ENCODE measurements at regions of chr17 and their contacts with region 1.

Region 1: GRCh38 chr17:41322094-41322902 is 6.8 kb upstream of the KRTAP17-1 start:
- DNase-seq: peak in 4 of 14 experiments; percentile 33 to 75 (median 70)
- ATAC-seq: peak; percentile 87
- H3K4me3 ChIP-seq: no peak overlapping the region
- H3K4me3 Mint-ChIP-seq: peak overlapping the region; percentile 23
- H3K27ac ChIP-seq: no peak overlapping the region
- H3K27ac Mint-ChIP-seq: peak overlapping the region; percentile 89
- H3K4me1 ChIP-seq: peaks cover 54% of the 10 kb centered on the region
- H3K4me1 Mint-ChIP-seq: peaks cover 59% of the 10 kb centered on the region
- H3K27me3 ChIP-seq: no peaks in the 10 kb centered on the region
- H3K27me3 Mint-ChIP-seq: no peaks in the 10 kb centered on the region
- CTCF ChIP-seq: peak; percentile 88

Region 2: DNA sequence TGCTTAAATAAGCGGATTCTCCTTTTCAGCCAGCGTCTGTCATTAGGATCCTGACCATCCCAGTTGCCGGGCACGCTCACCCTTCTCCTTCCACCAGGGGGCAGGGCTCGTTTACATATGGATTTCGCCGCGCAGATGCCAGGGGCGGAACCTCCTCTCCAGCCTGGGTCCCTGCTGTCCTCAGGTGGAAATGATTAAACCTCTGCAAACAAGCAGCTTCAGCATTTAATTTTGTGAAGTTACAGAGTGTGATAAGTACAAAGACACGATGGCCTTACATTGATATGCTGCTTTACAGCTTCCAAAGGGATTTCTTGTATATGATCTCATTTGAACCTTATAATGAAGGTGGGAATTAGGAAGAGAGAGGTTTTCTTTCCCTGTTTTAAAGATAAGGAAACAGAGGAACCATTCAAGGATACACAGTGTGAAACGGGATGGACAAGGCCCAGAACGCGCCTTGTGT is 518.6 kb before region 1 on chr17:
- CTCF ChIA-PET with region 1: no interaction called
- POLR2A ChIA-PET with region 1: no interaction called
- intact Hi-C with region 1: loop called in 1 of 2 experiments (anchors 5 kb)
- DNase-seq: peak; percentile 51 to 85 (median 66)
- ATAC-seq: peak; percentile 89
- H3K4me3 ChIP-seq: no peak overlapping the region
- H3K4me3 Mint-ChIP-seq: no peak overlapping the region
- H3K27ac ChIP-seq: no peak overlapping the region
- H3K27ac Mint-ChIP-seq: no peak overlapping the region
- H3K4me1 ChIP-seq: no peaks in the 10 kb centered on the region
- H3K4me1 Mint-ChIP-seq: peaks cover 4% of the 10 kb centered on the region
- H3K27me3 ChIP-seq: peaks cover 11 to 58% of the 10 kb centered on the region in 2 experiments
- H3K27me3 Mint-ChIP-seq: peaks cover 54% of the 10 kb centered on the region
- CTCF ChIP-seq: peak; percentile 91

Region 3: DNA sequence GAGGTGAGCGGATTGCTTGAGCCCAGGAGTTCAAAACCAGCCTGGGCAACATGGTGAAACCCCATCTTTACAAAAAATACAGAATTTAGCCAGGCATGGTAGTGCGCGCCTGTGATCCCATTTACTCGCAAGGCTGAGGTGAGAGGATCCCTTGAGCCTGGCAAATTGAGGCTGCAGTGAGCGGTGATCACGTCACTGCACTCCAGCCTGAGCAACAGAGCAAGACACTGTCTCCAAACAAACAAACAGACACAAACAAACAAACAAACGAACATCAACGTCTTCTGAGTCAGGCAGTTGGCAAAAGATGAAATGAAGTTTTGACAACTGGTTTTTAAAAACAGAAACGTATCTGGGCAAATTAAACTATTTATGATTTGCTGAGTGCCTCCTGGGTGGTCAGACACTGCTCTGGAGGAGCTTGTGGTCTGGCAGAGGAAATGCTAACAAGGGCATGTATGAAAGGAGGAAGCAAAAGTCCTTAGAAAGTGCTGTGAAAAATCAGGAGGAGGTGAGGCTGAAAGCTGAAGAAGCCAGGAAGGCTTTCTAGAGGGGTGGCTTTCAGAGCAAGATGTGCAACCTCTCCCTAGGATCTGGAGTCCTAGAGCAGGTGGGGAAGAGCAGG is 427.1 kb before region 1 on chr17:
- CTCF ChIA-PET with region 1: no interaction called
- POLR2A ChIA-PET with region 1: no interaction called
- intact Hi-C with region 1: no loop called
- DNase-seq: no peak
- ATAC-seq: no peak
- H3K4me3 ChIP-seq: no peak overlapping the region
- H3K4me3 Mint-ChIP-seq: no peak overlapping the region
- H3K27ac ChIP-seq: no peak overlapping the region
- H3K27ac Mint-ChIP-seq: no peak overlapping the region
- H3K4me1 ChIP-seq: no peaks in the 10 kb centered on the region
- H3K4me1 Mint-ChIP-seq: no peaks in the 10 kb centered on the region
- H3K27me3 ChIP-seq: peaks cover 2 to 21% of the 10 kb centered on the region in 2 experiments
- H3K27me3 Mint-ChIP-seq: peaks cover 69% of the 10 kb centered on the region
- CTCF ChIP-seq: no peak

Region 4: GRCh38 chr17:41073676-41074075 is 248.6 kb before region 1 on chr17:
- CTCF ChIA-PET with region 1: no interaction called
- POLR2A ChIA-PET with region 1: no interaction called
- intact Hi-C with region 1: no loop called
- DNase-seq: no peak
- ATAC-seq: no peak
- H3K4me3 ChIP-seq: no peak overlapping the region
- H3K4me3 Mint-ChIP-seq: no peak overlapping the region
- H3K27ac ChIP-seq: no peak overlapping the region
- H3K27ac Mint-ChIP-seq: no peak overlapping the region
- H3K4me1 ChIP-seq: no peaks in the 10 kb centered on the region
- H3K4me1 Mint-ChIP-seq: no peaks in the 10 kb centered on the region
- H3K27me3 ChIP-seq: no peaks in the 10 kb centered on the region
- H3K27me3 Mint-ChIP-seq: peaks cover 32% of the 10 kb centered on the region
- CTCF ChIP-seq: no peak

Region 5: DNA sequence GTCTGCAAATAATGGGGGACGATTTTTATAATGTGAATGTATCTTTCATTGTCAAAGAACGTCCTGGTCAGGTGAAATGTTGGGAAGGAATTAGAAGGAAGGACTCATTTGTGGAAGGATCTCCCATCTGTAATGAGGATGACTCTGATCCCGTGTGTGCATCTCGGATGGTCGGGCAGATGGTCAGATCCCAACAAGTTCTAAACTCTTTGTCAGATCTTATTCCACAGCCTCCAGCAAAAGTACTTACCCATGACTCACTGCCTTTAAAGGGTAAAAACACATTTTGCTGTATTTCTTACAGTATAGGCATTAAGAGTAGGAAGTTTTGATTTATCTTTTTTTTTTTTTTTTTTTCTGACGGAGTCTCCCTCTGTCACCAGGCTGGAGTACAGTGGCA is 223.8 kb before region 1 on chr17:
- CTCF ChIA-PET with region 1: no interaction called
- POLR2A ChIA-PET with region 1: no interaction called
- intact Hi-C with region 1: loop called in 1 of 2 experiments (anchors 5 kb)
- DNase-seq: no peak
- ATAC-seq: no peak
- H3K4me3 ChIP-seq: no peak overlapping the region
- H3K4me3 Mint-ChIP-seq: no peak overlapping the region
- H3K27ac ChIP-seq: no peak overlapping the region
- H3K27ac Mint-ChIP-seq: no peak overlapping the region
- H3K4me1 ChIP-seq: peaks cover 3% of the 10 kb centered on the region
- H3K4me1 Mint-ChIP-seq: peaks cover 17% of the 10 kb centered on the region
- H3K27me3 ChIP-seq: peaks cover 0 to 2% of the 10 kb centered on the region in 2 experiments
- H3K27me3 Mint-ChIP-seq: peaks cover 10% of the 10 kb centered on the region
- CTCF ChIP-seq: no peak

Region 6: GRCh38 chr17:41121742-41122141 is 200.6 kb before region 1 on chr17:
- CTCF ChIA-PET with region 1: no interaction called
- POLR2A ChIA-PET with region 1: interaction called, 3 read pairs
- intact Hi-C with region 1: loop called (anchors 1 to 5 kb)
- DNase-seq: no peak
- ATAC-seq: no peak
- H3K4me3 ChIP-seq: no peak overlapping the region
- H3K4me3 Mint-ChIP-seq: no peak overlapping the region
- H3K27ac ChIP-seq: no peak overlapping the region
- H3K27ac Mint-ChIP-seq: no peak overlapping the region
- H3K4me1 ChIP-seq: peaks cover 25% of the 10 kb centered on the region
- H3K4me1 Mint-ChIP-seq: peaks cover 71% of the 10 kb centered on the region
- H3K27me3 ChIP-seq: no peaks in the 10 kb centered on the region
- H3K27me3 Mint-ChIP-seq: no peaks in the 10 kb centered on the region
- CTCF ChIP-seq: no peak

Region 7: DNA sequence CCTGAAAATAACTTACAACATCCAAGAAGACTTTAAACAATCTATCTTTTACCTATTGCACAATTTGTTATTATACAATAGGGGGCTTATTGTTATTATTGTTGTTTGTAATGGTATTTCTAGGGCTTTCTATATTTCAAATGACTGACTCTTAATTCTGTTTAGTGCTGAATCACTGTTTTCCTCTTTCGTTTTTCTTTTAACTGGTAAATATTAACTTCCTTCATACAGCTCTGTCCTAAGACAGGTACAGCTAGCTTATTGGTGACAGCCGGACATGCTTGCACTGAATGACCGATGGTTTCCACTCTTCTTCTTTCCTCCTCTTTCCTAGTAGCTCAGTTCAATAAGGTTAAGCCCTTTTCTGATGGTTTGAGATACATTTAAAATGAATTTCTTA is 35.2 kb before region 1 on chr17:
- CTCF ChIA-PET with region 1: no interaction called
- POLR2A ChIA-PET with region 1: no interaction called
- intact Hi-C with region 1: no loop called
- DNase-seq: no peak
- ATAC-seq: no peak
- H3K4me3 ChIP-seq: no peak overlapping the region
- H3K4me3 Mint-ChIP-seq: no peak overlapping the region
- H3K27ac ChIP-seq: no peak overlapping the region
- H3K27ac Mint-ChIP-seq: no peak overlapping the region
- H3K4me1 ChIP-seq: no peaks in the 10 kb centered on the region
- H3K4me1 Mint-ChIP-seq: peaks cover 18% of the 10 kb centered on the region
- H3K27me3 ChIP-seq: no peaks in the 10 kb centered on the region
- H3K27me3 Mint-ChIP-seq: no peaks in the 10 kb centered on the region
- CTCF ChIP-seq: no peak

Region 8: GRCh38 chr17:41298458-41299135 is 23.7 kb before region 1 on chr17:
- CTCF ChIA-PET with region 1: interaction called, 4 read pairs
- POLR2A ChIA-PET with region 1: no interaction called
- intact Hi-C with region 1: loop called in 1 of 2 experiments (anchors 1 kb)
- DNase-seq: no peak
- ATAC-seq: no peak
- H3K4me3 ChIP-seq: no peak overlapping the region
- H3K4me3 Mint-ChIP-seq: no peak overlapping the region
- H3K27ac ChIP-seq: no peak overlapping the region
- H3K27ac Mint-ChIP-seq: no peak overlapping the region
- H3K4me1 ChIP-seq: no peaks in the 10 kb centered on the region
- H3K4me1 Mint-ChIP-seq: peaks cover 13% of the 10 kb centered on the region
- H3K27me3 ChIP-seq: no peaks in the 10 kb centered on the region
- H3K27me3 Mint-ChIP-seq: peaks cover 4% of the 10 kb centered on the region
- CTCF ChIP-seq: no peak

Region 9: DNA sequence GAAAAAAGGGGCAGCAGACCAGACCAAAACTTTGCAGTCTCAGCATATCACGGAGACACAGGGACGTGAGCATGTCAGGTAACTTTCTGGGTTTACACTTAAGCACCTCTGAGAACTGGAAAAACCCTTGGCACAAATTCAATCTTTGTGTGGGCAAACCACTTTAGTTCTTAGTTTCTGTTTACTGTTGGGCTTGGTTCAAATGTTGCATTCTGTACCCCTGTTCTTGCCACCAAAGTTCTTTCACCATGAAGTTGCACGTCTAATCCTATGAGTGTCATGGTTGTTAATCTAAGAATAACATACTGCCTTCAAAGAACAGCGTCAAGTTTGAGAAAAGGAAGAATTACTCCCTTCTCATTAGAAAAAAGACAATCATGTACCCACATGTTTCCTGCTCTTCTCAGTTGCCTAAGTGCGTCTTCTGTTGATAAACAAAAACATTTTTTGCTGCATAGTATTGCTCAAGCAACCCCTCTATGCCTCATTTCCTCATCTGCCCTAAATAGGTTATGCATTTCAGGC is 16.7 kb after region 1 on chr17:
- CTCF ChIA-PET with region 1: interaction called, 15 read pairs
- POLR2A ChIA-PET with region 1: interaction called, 12 read pairs
- intact Hi-C with region 1: no loop called
- DNase-seq: peak in 8 of 14 experiments; percentile 25 to 93 (median 52)
- ATAC-seq: peak; percentile 83
- H3K4me3 ChIP-seq: no peak overlapping the region
- H3K4me3 Mint-ChIP-seq: peak overlapping the region; percentile 23
- H3K27ac ChIP-seq: peak overlapping the region; percentile 87 to 88
- H3K27ac Mint-ChIP-seq: peak overlapping the region; percentile 94
- H3K4me1 ChIP-seq: peaks cover 88% of the 10 kb centered on the region
- H3K4me1 Mint-ChIP-seq: peaks cover 88% of the 10 kb centered on the region
- H3K27me3 ChIP-seq: no peaks in the 10 kb centered on the region
- H3K27me3 Mint-ChIP-seq: no peaks in the 10 kb centered on the region
- CTCF ChIP-seq: no peak

Region 10: GRCh38 chr17:41382396-41382795 is 60.1 kb after region 1 on chr17:
- CTCF ChIA-PET with region 1: no interaction called
- POLR2A ChIA-PET with region 1: no interaction called
- intact Hi-C with region 1: no loop called
- DNase-seq: no peak
- ATAC-seq: no peak
- H3K4me3 ChIP-seq: no peak overlapping the region
- H3K4me3 Mint-ChIP-seq: no peak overlapping the region
- H3K27ac ChIP-seq: no peak overlapping the region
- H3K27ac Mint-ChIP-seq: no peak overlapping the region
- H3K4me1 ChIP-seq: peaks cover 4% of the 10 kb centered on the region
- H3K4me1 Mint-ChIP-seq: peaks cover 16% of the 10 kb centered on the region
- H3K27me3 ChIP-seq: no peaks in the 10 kb centered on the region
- H3K27me3 Mint-ChIP-seq: no peaks in the 10 kb centered on the region
- CTCF ChIP-seq: no peak

Region 11: GRCh38 chr17:41648411-41649195 is 326.3 kb after region 1 on chr17:
- CTCF ChIA-PET with region 1: interaction called, 4 read pairs
- POLR2A ChIA-PET with region 1: no interaction called
- intact Hi-C with region 1: loop called in 1 of 2 experiments (anchors 5 kb)
- DNase-seq: peak; percentile 70 to 92 (median 82)
- ATAC-seq: peak; percentile 88
- H3K4me3 ChIP-seq: peak overlapping the region; percentile 67
- H3K4me3 Mint-ChIP-seq: peak overlapping the region; percentile 86
- H3K27ac ChIP-seq: no peak overlapping the region
- H3K27ac Mint-ChIP-seq: peak overlapping the region; percentile 50
- H3K4me1 ChIP-seq: peaks cover 15% of the 10 kb centered on the region
- H3K4me1 Mint-ChIP-seq: peaks cover 12% of the 10 kb centered on the region
- H3K27me3 ChIP-seq: no peaks in the 10 kb centered on the region
- H3K27me3 Mint-ChIP-seq: no peaks in the 10 kb centered on the region
- CTCF ChIP-seq: peak; percentile 81

Measured in CD4-positive, alpha-beta T cell (primary cell).